CD14-positive monocyte (primary cell): ENCODE measurements at regions of chr1 and their contacts with region 1.

Region 1: DNA sequence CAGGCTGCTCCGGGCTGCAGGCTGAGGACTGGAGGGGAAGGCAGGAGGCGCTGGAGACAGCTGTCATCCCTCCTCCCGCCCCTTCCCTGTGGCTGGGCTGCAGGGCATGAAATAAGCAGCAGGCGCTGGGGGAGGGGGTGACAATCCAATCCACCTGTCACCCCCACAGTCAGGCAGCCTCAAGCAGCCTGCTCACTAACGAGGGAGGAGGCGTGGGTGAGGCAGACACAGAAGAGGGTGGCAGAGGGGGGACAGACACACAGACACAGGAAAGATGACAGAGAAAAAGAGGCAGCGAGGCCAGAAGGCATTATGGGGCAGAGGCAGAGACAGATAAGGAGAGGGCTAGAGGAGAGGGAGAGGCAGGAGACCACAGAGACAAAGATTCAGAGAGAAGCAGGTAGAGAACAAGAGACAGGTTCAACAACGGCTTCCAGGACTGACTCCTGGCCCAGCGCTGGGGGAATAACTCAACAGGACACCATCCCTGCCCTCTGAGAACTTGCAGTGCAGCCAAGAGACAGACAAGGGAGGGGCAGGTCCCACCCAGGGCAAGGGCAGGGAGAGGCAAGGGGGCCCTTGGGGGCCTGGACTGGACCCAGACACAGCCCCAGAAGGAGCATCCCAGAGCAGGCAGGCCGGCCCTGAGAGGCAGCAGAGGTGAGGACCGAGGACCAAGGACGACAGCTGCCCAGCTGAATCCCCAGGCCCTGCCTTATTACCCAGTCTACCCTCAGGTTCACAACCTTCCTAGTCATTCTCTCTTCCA is 11.2 kb downstream of the MEF2D start:
- DNase-seq: peak in 1 of 3 donors; percentile 42
- H3K4me3 ChIP-seq: peak overlapping the region in 1 of 3 experiments; percentile 60
- H3K4me3 Mint-ChIP-seq: peak overlapping the region; percentile 59 to 66
- H3K27ac ChIP-seq: peak overlapping the region; percentile 77 to 98
- H3K27ac Mint-ChIP-seq: peak overlapping the region; percentile 87 to 95 (median 92)
- H3K4me1 ChIP-seq: peaks cover 82 to 94% of the 10 kb centered on the region in 2 donors
- H3K4me1 Mint-ChIP-seq: peaks cover 97% of the 10 kb centered on the region
- H3K27me3 ChIP-seq: no peaks in the 10 kb centered on the region
- H3K27me3 Mint-ChIP-seq: peaks cover 0 to 3% (median 2%) of the 10 kb centered on the region in 3 donors
- CTCF ChIP-seq: no peak

Region 2: GRCh38 chr1:156525071-156525501 is 35.7 kb after region 1 on chr1:
- intact Hi-C with region 1: loop called (anchors 5 kb)
- DNase-seq: peak in 1 of 3 donors; percentile 36
- H3K4me3 ChIP-seq: peak overlapping the region; percentile 3 to 64 (median 49)
- H3K4me3 Mint-ChIP-seq: peak overlapping the region; percentile 72 to 91
- H3K27ac ChIP-seq: peak overlapping the region; percentile 61 to 81
- H3K27ac Mint-ChIP-seq: peak overlapping the region; percentile 88 to 98 (median 96)
- H3K4me1 ChIP-seq: peaks cover 40 to 53% of the 10 kb centered on the region in 2 donors
- H3K4me1 Mint-ChIP-seq: peaks cover 47% of the 10 kb centered on the region
- H3K27me3 ChIP-seq: no peaks in the 10 kb centered on the region
- H3K27me3 Mint-ChIP-seq: no peaks in the 10 kb centered on the region
- CTCF ChIP-seq: no peak

Region 3: DNA sequence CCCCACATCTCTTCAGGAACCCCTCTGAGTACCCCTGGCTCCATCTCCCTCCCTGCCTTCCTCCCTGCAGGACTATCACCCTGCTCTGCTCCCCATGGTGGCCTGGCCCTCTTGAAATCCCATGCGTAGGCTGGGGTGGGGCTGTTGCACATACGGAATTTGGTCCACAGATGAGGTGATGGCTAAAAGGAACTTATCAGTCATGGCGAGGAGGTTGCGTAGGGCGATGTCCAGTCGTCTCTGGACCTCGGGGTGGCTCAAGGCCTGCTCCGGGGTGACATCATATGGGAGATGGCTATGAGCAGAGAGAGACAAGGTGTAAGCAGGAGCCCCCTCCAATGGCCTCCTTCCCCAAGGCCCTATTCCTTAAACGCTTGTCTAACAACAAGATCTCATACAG is 47.7 kb after region 1 on chr1:
- intact Hi-C with region 1: no loop called
- DNase-seq: no peak
- H3K4me3 ChIP-seq: no peak overlapping the region
- H3K4me3 Mint-ChIP-seq: no peak overlapping the region
- H3K27ac ChIP-seq: peak overlapping the region in 1 of 2 donors; percentile 13
- H3K27ac Mint-ChIP-seq: peak overlapping the region in 2 of 7 donors; percentile 25 to 61
- H3K4me1 ChIP-seq: no peaks in the 10 kb centered on the region
- H3K4me1 Mint-ChIP-seq: peaks cover 12% of the 10 kb centered on the region
- H3K27me3 ChIP-seq: no peaks in the 10 kb centered on the region
- H3K27me3 Mint-ChIP-seq: peaks cover 0 to 3% (median 0%) of the 10 kb centered on the region in 3 donors
- CTCF ChIP-seq: no peak

Region 4: GRCh38 chr1:156571949-156572662 is 82.8 kb after region 1 on chr1 and contains the start of gene IQGAP3:
- intact Hi-C with region 1: loop called in 1 of 2 experiments (anchors 5 kb)
- DNase-seq: peak; percentile 83 to 90 (median 88)
- H3K4me3 ChIP-seq: peak within 1 kb of the TSS; percentile 29 to 77 (median 42)
- H3K4me3 Mint-ChIP-seq: peak within 1 kb of the TSS; percentile 82 to 92
- H3K27ac ChIP-seq: no peak within 1 kb of the TSS
- H3K27ac Mint-ChIP-seq: peak within 1 kb of the TSS in 5 of 7 donors; percentile 21 to 82 (median 39)
- H3K4me1 ChIP-seq: peaks cover 22 to 24% of the 10 kb centered on the region in 2 donors
- H3K4me1 Mint-ChIP-seq: peaks cover 29% of the 10 kb centered on the region
- H3K27me3 ChIP-seq: no peaks in the 10 kb centered on the region
- H3K27me3 Mint-ChIP-seq: peaks cover 0 to 8% (median 7%) of the 10 kb centered on the region in 3 donors
- CTCF ChIP-seq: no peak
- polyA plus RNA-seq, gene IQGAP3: 0.03 to 0.24 TPM in 2 of 3 donors, not detected in the other